GM12878 (cell line): ENCODE measurements at regions of chr2 and their contacts with region 1.

Region 1: DNA sequence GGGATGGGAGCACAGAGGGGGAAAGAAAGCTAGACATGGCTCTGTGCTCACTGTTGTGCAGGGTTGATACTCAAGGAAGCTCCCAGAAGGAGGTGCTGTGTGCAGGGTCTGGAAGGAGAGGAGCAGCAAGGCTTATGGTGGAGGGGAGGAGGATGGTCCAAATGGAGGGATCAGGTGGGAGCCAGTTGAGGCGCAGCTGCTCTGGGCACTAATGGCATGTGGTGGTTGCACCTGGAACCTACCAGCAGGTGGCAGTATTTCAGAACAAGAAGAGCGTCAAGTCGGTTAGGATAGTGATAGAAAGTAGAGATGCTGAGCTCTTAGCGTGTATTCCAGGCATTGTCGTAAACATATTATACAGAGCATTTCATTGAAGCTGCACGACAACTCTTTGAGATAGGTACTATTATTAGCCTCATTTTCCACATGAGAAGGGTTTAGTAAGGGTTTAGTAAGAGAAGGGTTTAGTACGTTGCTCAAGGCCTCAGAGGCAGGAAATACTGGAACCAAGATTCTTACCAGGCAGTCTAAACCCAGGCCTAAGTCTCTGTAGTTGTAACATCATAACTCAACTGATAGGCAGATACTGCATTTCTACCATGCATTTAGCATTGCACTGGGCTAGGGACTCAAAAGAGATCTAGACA is 223.7 kb downstream of the CYP26B1 start:
- DNase-seq: peak; percentile 2
- ATAC-seq: peak; percentile 96
- H3K4me3 ChIP-seq: no peak overlapping the region
- H3K27ac ChIP-seq: no peak overlapping the region
- H3K4me1 ChIP-seq: no peaks in the 10 kb centered on the region
- H3K27me3 ChIP-seq: no peaks in the 10 kb centered on the region
- CTCF ChIP-seq: peak; percentile 79 to 82 (median 81)
- EP300 ChIP-seq: no peak
- POLR2A ChIP-seq: no peak
- RAD21 ChIP-seq: peak; percentile 66

Region 2: DNA sequence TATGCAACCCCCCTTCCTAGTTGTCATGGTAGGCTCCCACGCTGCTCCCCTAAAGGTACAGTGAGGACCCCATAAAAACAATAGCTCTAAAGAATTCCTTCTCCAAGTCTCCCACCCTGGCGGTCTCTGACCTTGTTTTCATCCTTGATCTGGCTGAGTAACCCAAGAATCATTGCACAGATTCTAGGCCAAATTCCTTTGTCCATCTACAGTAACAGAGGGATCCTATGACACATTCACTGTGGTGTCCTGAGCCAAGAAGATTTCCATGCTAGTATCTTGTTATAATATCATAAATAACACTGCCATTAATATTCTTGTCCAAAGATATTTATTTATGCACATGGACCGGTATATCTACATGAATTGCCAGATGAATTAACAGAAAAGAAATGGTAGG is 16.5 kb before region 1 on chr2:
- CTCF ChIA-PET with region 1: interaction called, 16 read pairs
- POLR2A ChIA-PET with region 1: no interaction called
- RAD21 ChIA-PET with region 1: no interaction called
- SMC1A ChIA-PET with region 1: interaction called, 5 read pairs
- in situ Hi-C with region 1: no loop called
- intact Hi-C with region 1: no loop called
- DNase-seq: no peak
- ATAC-seq: no peak
- H3K4me3 ChIP-seq: no peak overlapping the region
- H3K27ac ChIP-seq: no peak overlapping the region
- H3K4me1 ChIP-seq: no peaks in the 10 kb centered on the region
- H3K27me3 ChIP-seq: no peaks in the 10 kb centered on the region
- CTCF ChIP-seq: no peak
- EP300 ChIP-seq: no peak
- POLR2A ChIP-seq: no peak
- RAD21 ChIP-seq: no peak

Region 3: GRCh38 chr2:72137498-72138010 is 213.5 kb after region 1 on chr2:
- CTCF ChIA-PET with region 1: no interaction called
- POLR2A ChIA-PET with region 1: no interaction called
- RAD21 ChIA-PET with region 1: no interaction called
- SMC1A ChIA-PET with region 1: no interaction called
- in situ Hi-C with region 1: no loop called
- intact Hi-C with region 1: loop called (anchors 5 kb)
- DNase-seq: no peak
- ATAC-seq: peak; percentile 98
- H3K4me3 ChIP-seq: no peak overlapping the region
- H3K27ac ChIP-seq: no peak overlapping the region
- H3K4me1 ChIP-seq: no peaks in the 10 kb centered on the region
- H3K27me3 ChIP-seq: no peaks in the 10 kb centered on the region
- CTCF ChIP-seq: peak; percentile 89 to 94 (median 93)
- EP300 ChIP-seq: no peak
- POLR2A ChIP-seq: no peak
- RAD21 ChIP-seq: peak; percentile 60

Region 4: DNA sequence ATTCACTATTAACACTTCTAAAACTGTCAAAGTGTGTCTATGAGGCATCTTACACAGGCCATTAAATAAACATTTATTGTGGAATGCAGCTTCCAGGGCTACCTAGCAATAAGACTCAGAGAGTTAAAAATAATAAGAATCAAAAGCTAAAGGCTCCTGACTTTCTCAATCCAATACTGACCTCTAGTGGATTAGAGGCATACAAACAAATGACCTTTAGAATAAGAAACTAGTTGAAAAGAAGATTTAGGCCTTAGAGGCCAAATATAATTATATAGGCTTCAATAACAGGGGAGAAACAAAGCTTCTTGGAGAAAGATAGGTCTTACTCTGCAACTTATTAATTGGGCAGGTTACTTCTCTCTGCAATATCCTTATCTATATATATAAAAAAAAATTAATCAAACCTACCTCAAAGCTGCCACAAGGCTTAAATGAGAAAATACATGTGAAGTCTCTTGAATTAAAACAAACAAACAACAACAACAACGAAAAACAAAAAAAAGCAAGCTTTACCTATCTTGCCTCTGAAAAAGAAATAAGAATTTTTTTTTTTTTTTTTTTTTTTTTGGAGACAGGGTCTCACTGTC is 655.7 kb after region 1 on chr2:
- CTCF ChIA-PET with region 1: interaction called, 17 read pairs
- POLR2A ChIA-PET with region 1: no interaction called
- RAD21 ChIA-PET with region 1: interaction called, 10 read pairs
- SMC1A ChIA-PET with region 1: interaction called, 9 read pairs
- in situ Hi-C with region 1: loop called (anchors 5 kb)
- intact Hi-C with region 1: loop called (anchors 1 kb)
- DNase-seq: no peak
- ATAC-seq: peak; percentile 71
- H3K4me3 ChIP-seq: no peak overlapping the region
- H3K27ac ChIP-seq: no peak overlapping the region
- H3K4me1 ChIP-seq: no peaks in the 10 kb centered on the region
- H3K27me3 ChIP-seq: no peaks in the 10 kb centered on the region
- CTCF ChIP-seq: peak; percentile 44 to 71 (median 53); a peak in 5 of 6 replicates
- EP300 ChIP-seq: no peak
- POLR2A ChIP-seq: no peak
- RAD21 ChIP-seq: peak; percentile 78

Region 5: GRCh38 chr2:72745679-72746368 is 821.8 kb after region 1 on chr2:
- CTCF ChIA-PET with region 1: interaction called, 21 read pairs
- POLR2A ChIA-PET with region 1: no interaction called
- RAD21 ChIA-PET with region 1: interaction called, 5 read pairs
- SMC1A ChIA-PET with region 1: interaction called, 4 read pairs
- in situ Hi-C with region 1: loop called (anchors 5 kb)
- intact Hi-C with region 1: loop called (anchors 1 kb)
- DNase-seq: no peak
- ATAC-seq: peak; percentile 52; the same call in 2 of the 3 replicates
- H3K4me3 ChIP-seq: no peak overlapping the region
- H3K27ac ChIP-seq: no peak overlapping the region
- H3K4me1 ChIP-seq: no peaks in the 10 kb centered on the region
- H3K27me3 ChIP-seq: no peaks in the 10 kb centered on the region
- CTCF ChIP-seq: peak; percentile 50 to 62 (median 58); a peak in 5 of 6 replicates
- EP300 ChIP-seq: no peak
- POLR2A ChIP-seq: no peak
- RAD21 ChIP-seq: peak; percentile 70